ENCODE measurements at regions of chr7 and their contacts with region 1.

Region 1: DNA sequence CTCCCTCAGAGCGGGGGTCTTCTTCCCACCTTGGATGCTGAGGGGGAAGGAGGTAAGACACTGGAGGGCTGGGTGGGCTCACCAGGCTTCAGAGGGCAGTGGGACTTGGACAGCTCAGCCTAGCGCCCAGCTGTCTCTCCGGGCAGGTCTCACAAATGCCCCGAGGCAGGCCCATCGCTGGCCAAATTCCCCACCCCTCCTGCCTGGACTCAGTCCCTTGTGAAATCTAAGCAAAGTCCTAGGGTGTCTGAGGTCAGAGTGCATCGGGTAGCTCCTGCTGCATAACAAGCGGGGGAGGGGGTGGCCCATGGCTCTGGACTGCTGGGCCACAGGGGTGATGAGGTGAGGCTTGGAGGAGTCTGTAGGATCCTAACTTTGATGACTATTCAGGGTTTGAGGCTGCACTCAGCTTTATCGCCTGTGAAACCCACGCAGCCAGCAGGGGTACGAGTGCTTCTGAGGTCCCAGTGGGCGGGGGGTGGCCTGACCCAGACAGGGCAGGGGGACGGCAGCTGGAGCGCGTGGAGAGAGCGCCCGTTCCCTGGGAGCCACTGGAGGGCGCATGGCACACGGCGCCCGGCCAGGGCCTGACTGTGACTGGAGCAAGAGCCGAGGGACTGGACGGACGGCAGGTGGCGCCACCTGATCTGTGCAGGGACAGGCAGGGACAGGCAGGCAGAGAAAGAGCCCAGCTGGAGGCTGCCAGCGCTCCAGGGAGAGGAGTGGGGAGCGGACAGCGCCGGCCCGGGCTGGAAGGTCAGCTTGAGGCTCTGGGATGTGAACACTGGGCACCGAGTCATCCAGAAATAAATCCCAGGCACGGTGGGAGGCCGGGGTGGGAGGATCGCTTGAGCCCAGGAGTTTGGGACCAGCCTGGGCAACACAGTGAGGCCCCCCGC is 10.0 kb downstream of the CYP2W1 start:
- DNase-seq: peak; percentile 94
- ATAC-seq: peak; percentile 96
- H3K4me3 ChIP-seq: no peak overlapping the region
- H3K4me3 Mint-ChIP-seq: peak overlapping the region; percentile 47
- H3K27ac ChIP-seq: no peak overlapping the region
- H3K27ac Mint-ChIP-seq: peak overlapping the region; percentile 90
- H3K4me1 ChIP-seq: peaks cover 0 to 9% of the 10 kb centered on the region in 2 donors
- H3K4me1 Mint-ChIP-seq: peaks cover 13% of the 10 kb centered on the region
- H3K27me3 ChIP-seq: peaks cover 0 to 22% (median 2%) of the 10 kb centered on the region in 4 experiments
- H3K27me3 Mint-ChIP-seq: no peaks in the 10 kb centered on the region
- CTCF ChIP-seq: peak; percentile 100

Region 2: GRCh38 chr7:1004018-1004852 is 11.3 kb after region 1 on chr7:
- CTCF ChIA-PET with region 1: interaction called, 22 read pairs
- POLR2A ChIA-PET with region 1: interaction called, 3 read pairs
- intact Hi-C with region 1: no loop called
- DNase-seq: peak; percentile 87
- ATAC-seq: peak; percentile 82
- H3K4me3 ChIP-seq: no peak overlapping the region
- H3K4me3 Mint-ChIP-seq: peak overlapping the region; percentile 76
- H3K27ac ChIP-seq: peak overlapping the region in 1 of 2 donors; percentile 34
- H3K27ac Mint-ChIP-seq: peak overlapping the region; percentile 91
- H3K4me1 ChIP-seq: peaks cover 10 to 26% of the 10 kb centered on the region in 2 donors
- H3K4me1 Mint-ChIP-seq: peaks cover 40% of the 10 kb centered on the region
- H3K27me3 ChIP-seq: no peaks in the 10 kb centered on the region
- H3K27me3 Mint-ChIP-seq: no peaks in the 10 kb centered on the region
- CTCF ChIP-seq: no peak

Region 3: DNA sequence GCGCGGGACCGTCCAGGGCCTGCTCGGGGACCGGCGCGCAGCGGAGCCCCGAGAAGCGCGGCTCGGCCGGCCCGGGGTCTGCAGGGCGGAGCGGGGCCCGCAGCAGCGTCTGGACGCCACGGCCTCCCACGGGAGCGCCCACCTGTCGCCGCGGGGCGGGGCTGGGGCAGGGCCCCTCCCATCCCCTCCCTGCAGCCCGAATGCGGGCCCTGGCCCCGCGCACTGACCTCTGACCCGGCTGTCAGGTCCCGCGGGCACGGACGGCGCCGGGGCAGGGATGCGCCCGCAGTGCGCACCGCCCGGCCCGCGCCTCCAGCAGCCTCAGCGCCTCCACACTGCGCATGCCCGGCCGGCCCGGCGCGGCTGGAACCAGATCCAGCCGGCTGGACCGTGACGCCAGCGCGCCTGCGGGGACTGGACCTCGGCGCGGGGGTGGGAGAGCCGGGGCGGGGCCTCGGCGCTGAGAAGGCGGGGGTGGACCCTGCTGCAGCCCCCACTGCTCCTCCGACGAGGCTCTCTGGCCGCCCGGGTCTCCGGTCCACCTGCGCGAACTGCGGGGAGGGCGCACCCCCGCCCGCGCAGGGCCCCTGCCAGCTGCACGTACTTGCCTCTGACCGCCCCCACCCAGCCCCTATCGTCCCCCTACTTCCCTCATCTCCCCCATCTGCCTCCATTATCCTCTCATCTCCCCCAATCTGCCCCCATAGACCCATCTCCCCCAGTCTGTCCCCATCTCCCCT is 35.2 kb after region 1 on chr7:
- CTCF ChIA-PET with region 1: interaction called, 36 read pairs
- POLR2A ChIA-PET with region 1: interaction called, 15 read pairs
- intact Hi-C with region 1: loop called (anchors 2 kb)
- DNase-seq: peak; percentile 89
- ATAC-seq: peak; percentile 53
- H3K4me3 ChIP-seq: peak overlapping the region in 4 of 5 experiments; percentile 50 to 65 (median 58)
- H3K4me3 Mint-ChIP-seq: peak overlapping the region; percentile 89
- H3K27ac ChIP-seq: peak overlapping the region; percentile 47 to 56
- H3K27ac Mint-ChIP-seq: peak overlapping the region; percentile 82
- H3K4me1 ChIP-seq: peaks cover 59 to 72% of the 10 kb centered on the region in 2 donors
- H3K4me1 Mint-ChIP-seq: peaks cover 64% of the 10 kb centered on the region
- H3K27me3 ChIP-seq: peaks cover 0 to 4% (median 1%) of the 10 kb centered on the region in 4 experiments
- H3K27me3 Mint-ChIP-seq: peaks cover 3% of the 10 kb centered on the region
- CTCF ChIP-seq: no peak

Region 4: DNA sequence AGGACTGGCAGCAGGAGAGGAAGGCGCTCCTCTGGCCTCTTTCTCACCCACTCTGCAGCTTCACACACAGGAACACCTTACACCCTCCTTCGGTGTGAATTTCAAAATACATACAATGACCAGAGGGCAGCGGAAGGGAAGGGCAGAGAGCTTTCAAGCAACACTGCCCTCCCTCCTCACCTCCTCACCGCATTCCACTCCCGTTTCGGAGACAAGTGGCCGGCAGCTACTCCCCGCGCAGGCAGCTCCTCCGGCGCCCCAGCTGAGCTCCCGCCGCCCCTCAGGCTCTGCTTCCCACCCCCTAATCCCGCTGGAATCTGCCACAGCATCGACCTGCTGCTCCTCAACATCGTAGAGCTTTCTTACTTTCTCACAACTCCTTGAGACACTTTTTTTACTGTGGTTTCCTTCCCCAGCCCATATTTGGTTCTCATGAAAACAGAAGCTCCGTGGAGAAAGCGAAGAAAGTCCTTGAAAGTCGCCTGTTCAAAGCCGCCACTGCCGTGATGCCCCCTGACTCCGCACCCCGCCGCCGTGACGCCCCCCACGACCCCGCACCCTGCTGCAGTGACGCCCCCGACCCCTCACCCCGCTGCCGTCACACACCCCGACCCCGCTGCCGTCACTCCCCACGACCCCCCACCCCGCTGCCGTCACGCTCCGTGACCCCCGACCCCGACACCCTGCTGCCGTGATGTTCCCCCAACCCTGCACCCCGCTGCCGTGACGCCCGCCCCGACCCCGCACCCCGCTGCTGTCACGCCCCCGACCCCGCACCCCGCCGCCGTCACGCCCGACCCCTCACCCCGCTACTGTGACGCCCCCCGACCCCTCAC is 80.4 kb after region 1 on chr7:
- CTCF ChIA-PET with region 1: interaction called, 496 read pairs
- POLR2A ChIA-PET with region 1: interaction called, 3 read pairs
- intact Hi-C with region 1: no loop called
- DNase-seq: no peak
- ATAC-seq: no peak
- H3K4me3 ChIP-seq: no peak overlapping the region
- H3K4me3 Mint-ChIP-seq: no peak overlapping the region
- H3K27ac ChIP-seq: no peak overlapping the region
- H3K27ac Mint-ChIP-seq: no peak overlapping the region
- H3K4me1 ChIP-seq: no peaks in the 10 kb centered on the region
- H3K4me1 Mint-ChIP-seq: peaks cover 3% of the 10 kb centered on the region
- H3K27me3 ChIP-seq: no peaks in the 10 kb centered on the region
- H3K27me3 Mint-ChIP-seq: peaks cover 3% of the 10 kb centered on the region
- CTCF ChIP-seq: no peak

Region 5: GRCh38 chr7:1137510-1138167 is 144.7 kb after region 1 on chr7:
- CTCF ChIA-PET with region 1: interaction called, 84 read pairs
- POLR2A ChIA-PET with region 1: interaction called, 9 read pairs
- intact Hi-C with region 1: loop called (anchors 1 kb)
- DNase-seq: no peak
- ATAC-seq: peak; percentile 64
- H3K4me3 ChIP-seq: peak overlapping the region; percentile 21 to 96 (median 75)
- H3K4me3 Mint-ChIP-seq: peak overlapping the region; percentile 89
- H3K27ac ChIP-seq: peak overlapping the region; percentile 73 to 91
- H3K27ac Mint-ChIP-seq: peak overlapping the region; percentile 92
- H3K4me1 ChIP-seq: peaks cover 28 to 37% of the 10 kb centered on the region in 2 donors
- H3K4me1 Mint-ChIP-seq: peaks cover 43% of the 10 kb centered on the region
- H3K27me3 ChIP-seq: no peaks in the 10 kb centered on the region
- H3K27me3 Mint-ChIP-seq: no peaks in the 10 kb centered on the region
- CTCF ChIP-seq: no peak

Region 6: GRCh38 chr7:1175967-1176851 is 183.3 kb after region 1 on chr7:
- CTCF ChIA-PET with region 1: interaction called, 138 read pairs
- POLR2A ChIA-PET with region 1: no interaction called
- intact Hi-C with region 1: loop called (anchors 1 kb)
- DNase-seq: peak; percentile 80
- ATAC-seq: peak; percentile 73
- H3K4me3 ChIP-seq: peak overlapping the region in 3 of 5 experiments; percentile 11 to 24 (median 15)
- H3K4me3 Mint-ChIP-seq: peak overlapping the region; percentile 57
- H3K27ac ChIP-seq: no peak overlapping the region
- H3K27ac Mint-ChIP-seq: no peak overlapping the region
- H3K4me1 ChIP-seq: peaks cover 8 to 11% of the 10 kb centered on the region in 2 donors
- H3K4me1 Mint-ChIP-seq: peaks cover 10% of the 10 kb centered on the region
- H3K27me3 ChIP-seq: peaks cover 0 to 14% (median 5%) of the 10 kb centered on the region in 4 experiments
- H3K27me3 Mint-ChIP-seq: peaks cover 17% of the 10 kb centered on the region
- CTCF ChIP-seq: peak; percentile 86

Region 7: DNA sequence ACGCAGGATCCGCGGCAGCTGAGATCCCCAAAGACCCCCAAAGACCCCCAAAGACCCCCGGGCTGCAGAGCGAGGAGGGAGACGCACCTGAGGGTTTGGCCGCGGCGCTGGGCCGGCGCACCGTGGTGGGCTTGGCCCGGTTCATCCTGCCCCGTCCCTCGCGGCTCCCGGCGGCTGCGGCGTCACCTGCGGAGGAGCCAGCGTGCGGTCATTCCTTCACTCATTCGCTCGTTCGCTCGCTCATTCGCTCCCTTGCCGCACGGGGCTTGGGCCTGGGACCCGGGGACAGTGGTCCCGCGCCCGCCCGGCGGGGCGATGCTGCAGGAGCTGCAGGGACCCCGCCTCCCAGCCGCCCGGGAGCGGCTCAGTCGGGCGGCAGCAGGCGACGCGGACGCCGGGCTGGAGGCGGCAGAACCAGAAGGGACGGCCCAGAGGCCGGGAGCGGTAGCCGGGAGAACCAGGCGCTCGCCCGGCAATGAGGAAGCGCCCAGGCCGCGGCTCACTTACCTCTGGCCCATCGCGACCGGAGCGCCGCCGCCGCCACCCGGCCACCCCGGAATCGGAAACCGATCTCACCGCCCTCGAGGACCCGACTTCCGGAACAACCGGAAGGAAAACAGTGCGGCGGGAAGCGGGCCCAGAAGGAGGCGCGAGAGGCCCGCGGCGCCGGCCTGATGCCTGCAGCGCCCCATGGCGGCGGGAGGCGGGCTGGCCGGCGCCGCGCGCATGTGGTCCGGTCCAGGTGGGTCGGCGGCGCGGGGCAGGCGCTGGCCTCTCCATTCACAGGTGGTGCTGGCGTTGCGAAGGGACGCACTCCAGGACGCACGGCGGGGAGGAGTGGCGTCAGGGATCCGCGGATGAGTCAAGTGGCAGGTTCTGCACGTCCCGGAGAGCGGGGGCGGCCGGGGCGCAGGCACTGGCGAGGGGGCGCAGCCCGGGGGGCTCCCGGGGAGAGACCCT is 511.1 kb after region 1 on chr7 and contains the start of gene INTS1:
- CTCF ChIA-PET with region 1: no interaction called
- POLR2A ChIA-PET with region 1: no interaction called
- intact Hi-C with region 1: no loop called
- DNase-seq: peak; percentile 93
- ATAC-seq: peak; percentile 90
- H3K4me3 ChIP-seq: peak within 1 kb of the TSS; percentile 55 to 93 (median 77)
- H3K4me3 Mint-ChIP-seq: peak within 1 kb of the TSS; percentile 89
- H3K27ac ChIP-seq: peak within 1 kb of the TSS in 1 of 2 donors; percentile 69
- H3K27ac Mint-ChIP-seq: peak within 1 kb of the TSS; percentile 88
- H3K4me1 ChIP-seq: peaks cover 28 to 47% of the 10 kb centered on the region in 2 donors
- H3K4me1 Mint-ChIP-seq: peaks cover 47% of the 10 kb centered on the region
- H3K27me3 ChIP-seq: no peaks in the 10 kb centered on the region
- H3K27me3 Mint-ChIP-seq: no peaks in the 10 kb centered on the region
- CTCF ChIP-seq: peak; percentile 88
- total RNA-seq, gene INTS1: 128 and 142 TPM in 2 replicates

Region 8: DNA sequence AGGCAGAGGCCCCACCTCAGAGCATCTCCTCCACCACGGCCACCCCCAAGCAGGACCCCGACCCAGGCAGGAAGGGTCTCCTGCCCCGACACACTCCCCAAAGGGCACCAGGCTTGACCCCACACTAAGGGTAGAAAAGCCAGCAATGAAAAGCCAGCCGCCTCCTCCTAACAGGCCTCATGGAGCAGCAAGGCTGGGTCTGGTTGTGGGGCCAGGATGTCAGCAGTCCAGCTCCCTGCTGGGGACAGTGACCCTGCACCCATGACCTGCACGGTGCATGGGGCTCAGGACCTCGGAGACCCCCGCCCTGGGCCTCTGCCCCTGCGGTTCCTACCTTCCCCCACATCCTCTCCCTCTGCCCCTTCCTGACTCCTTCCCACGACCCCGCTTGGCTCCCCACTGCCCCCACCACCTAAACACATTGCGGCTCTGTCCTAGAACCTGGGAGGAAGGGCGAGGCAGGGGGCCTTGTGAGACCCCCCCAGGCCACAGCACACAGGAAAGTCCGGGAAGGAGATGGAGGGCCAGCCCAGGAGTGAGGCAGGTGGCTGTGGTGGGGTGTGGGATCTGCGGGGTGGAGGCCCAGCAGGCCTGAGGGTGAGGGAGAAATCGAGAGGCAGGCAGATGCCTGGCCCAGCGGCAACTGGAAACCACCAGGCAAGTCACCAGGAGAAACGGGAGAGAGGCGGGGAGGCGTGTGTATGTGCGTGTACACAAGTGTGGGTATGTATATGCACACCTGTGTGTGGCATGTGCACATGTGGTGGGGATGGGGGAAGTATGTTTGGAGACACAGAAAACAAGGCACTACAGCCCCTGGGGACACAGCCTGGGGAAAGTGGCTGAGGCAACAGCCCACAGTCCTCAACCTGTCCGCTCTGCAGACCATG is 1009.8 kb after region 1 on chr7:
- CTCF ChIA-PET with region 1: no interaction called
- POLR2A ChIA-PET with region 1: no interaction called
- intact Hi-C with region 1: no loop called
- DNase-seq: no peak
- ATAC-seq: no peak
- H3K4me3 ChIP-seq: no peak overlapping the region
- H3K4me3 Mint-ChIP-seq: no peak overlapping the region
- H3K27ac ChIP-seq: no peak overlapping the region
- H3K27ac Mint-ChIP-seq: peak overlapping the region; percentile 41
- H3K4me1 ChIP-seq: peaks cover 10 to 15% of the 10 kb centered on the region in 2 donors
- H3K4me1 Mint-ChIP-seq: peaks cover 37% of the 10 kb centered on the region
- H3K27me3 ChIP-seq: no peaks in the 10 kb centered on the region
- H3K27me3 Mint-ChIP-seq: no peaks in the 10 kb centered on the region
- CTCF ChIP-seq: no peak